Mammary epithelial cell (primary cell): ENCODE measurements at regions of chr16 and their contacts with region 1.

Region 1: GRCh38 chr16:10188236-10188635 is 6.0 kb upstream of the GRIN2A start:
- DNase-seq: peak; percentile 59
- H3K4me3 ChIP-seq: no peak overlapping the region
- H3K27ac ChIP-seq: no peak overlapping the region
- H3K4me1 ChIP-seq: peaks cover under 1% of the 10 kb centered on the region
- H3K27me3 ChIP-seq: peaks cover 8% of the 10 kb centered on the region
- CTCF ChIP-seq: no peak

Region 2: GRCh38 chr16:10103118-10103517 is 85.1 kb before region 1 on chr16:
- CTCF ChIA-PET with region 1: no interaction called
- dilution Hi-C with region 1: no loop called
- in situ Hi-C with region 1: no loop called
- intact Hi-C with region 1: no loop called
- DNase-seq: peak; percentile 37
- H3K4me3 ChIP-seq: no peak overlapping the region
- H3K27ac ChIP-seq: no peak overlapping the region
- H3K4me1 ChIP-seq: no peaks in the 10 kb centered on the region
- H3K27me3 ChIP-seq: no peaks in the 10 kb centered on the region
- CTCF ChIP-seq: no peak

Region 3: GRCh38 chr16:10239640-10240039 is 51.4 kb after region 1 on chr16:
- CTCF ChIA-PET with region 1: no interaction called
- dilution Hi-C with region 1: loop called (anchors 5 kb)
- in situ Hi-C with region 1: no loop called
- intact Hi-C with region 1: no loop called
- DNase-seq: no peak
- H3K4me3 ChIP-seq: no peak overlapping the region
- H3K27ac ChIP-seq: no peak overlapping the region
- H3K4me1 ChIP-seq: no peaks in the 10 kb centered on the region
- H3K27me3 ChIP-seq: no peaks in the 10 kb centered on the region
- CTCF ChIP-seq: no peak